H1 (cell line): ENCODE measurements at regions of chr3 and their contacts with region 1.

Region 1: GRCh38 chr3:142940483-142940882 is 23.0 kb downstream of the PAQR9 start:
- DNase-seq: no peak
- H3K4me3 ChIP-seq: no peak overlapping the region
- H3K27ac ChIP-seq: no peak overlapping the region
- H3K4me1 ChIP-seq: no peaks in the 10 kb centered on the region
- H3K27me3 ChIP-seq: no peaks in the 10 kb centered on the region
- CTCF ChIP-seq: no peak
- EP300 ChIP-seq: no peak
- POLR2A ChIP-seq: no peak
- RAD21 ChIP-seq: no peak

Region 2: DNA sequence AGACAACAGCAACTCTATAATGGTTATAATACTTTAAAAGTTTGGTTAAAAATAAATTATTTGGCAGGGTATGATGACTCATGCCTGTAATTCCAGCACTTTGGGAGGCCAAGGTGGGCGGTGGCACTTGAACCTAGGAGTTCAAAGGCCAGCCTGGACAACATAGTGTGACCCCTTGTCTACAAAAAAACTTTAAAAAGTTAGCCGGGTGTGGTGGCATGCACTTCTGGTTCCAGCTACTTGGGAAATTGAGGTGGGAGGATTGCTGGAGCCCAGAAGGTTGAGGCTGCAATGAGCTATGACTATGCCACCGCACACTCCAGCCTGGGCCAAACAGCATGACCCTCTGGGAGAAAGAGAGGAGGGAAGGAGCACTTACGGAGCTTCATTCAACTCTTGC is 224.4 kb before region 1 on chr3:
- CTCF ChIA-PET with region 1: no interaction called
- POLR2A ChIA-PET with region 1: no interaction called
- DNase-seq: no peak
- H3K4me3 ChIP-seq: no peak overlapping the region
- H3K27ac ChIP-seq: no peak overlapping the region
- H3K4me1 ChIP-seq: no peaks in the 10 kb centered on the region
- H3K27me3 ChIP-seq: no peaks in the 10 kb centered on the region
- CTCF ChIP-seq: no peak
- EP300 ChIP-seq: no peak
- POLR2A ChIP-seq: no peak
- RAD21 ChIP-seq: no peak

Region 3: DNA sequence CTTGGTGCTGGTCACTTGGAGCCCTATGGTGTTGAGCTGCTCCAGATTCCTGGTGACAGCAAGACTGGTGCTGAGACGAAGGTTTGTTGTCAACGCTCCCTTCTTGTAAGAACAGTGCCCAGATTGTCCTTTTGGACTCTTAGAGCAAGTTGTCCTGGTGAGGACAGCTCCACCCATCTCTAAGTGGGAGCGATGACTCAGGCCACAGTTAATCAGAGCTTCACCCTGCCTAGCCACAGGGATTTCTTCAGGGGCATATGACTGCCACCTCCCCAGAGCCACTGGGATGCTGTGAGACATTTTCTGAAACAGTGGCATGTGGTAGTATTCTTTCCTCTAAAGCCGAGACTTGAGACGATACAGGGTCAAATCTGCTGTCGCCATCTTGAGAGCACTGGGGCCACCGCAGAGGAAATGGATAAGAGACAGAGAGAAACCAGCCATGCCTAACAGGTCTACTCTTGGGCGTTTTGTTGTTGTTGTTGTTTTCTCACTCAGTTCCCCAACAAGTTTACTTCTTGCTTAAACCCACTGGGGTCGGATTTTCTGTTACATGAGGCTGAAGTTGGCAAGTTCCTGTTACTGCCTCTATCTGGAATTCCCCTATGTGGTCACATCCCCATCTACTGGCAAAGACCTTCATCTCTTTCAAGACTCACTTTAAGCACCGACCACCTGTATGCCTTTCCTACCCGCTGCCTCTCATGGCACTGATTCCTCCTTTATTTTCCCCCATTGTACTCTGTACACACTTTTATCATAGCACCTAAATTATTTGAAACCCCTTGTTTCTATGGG is 35.6 kb before region 1 on chr3:
- CTCF ChIA-PET with region 1: no interaction called
- POLR2A ChIA-PET with region 1: no interaction called
- DNase-seq: peak in 1 of 2 experiments; percentile 50
- H3K4me3 ChIP-seq: no peak overlapping the region
- H3K27ac ChIP-seq: no peak overlapping the region
- H3K4me1 ChIP-seq: no peaks in the 10 kb centered on the region
- H3K27me3 ChIP-seq: no peaks in the 10 kb centered on the region
- CTCF ChIP-seq: peak in 2 of 3 experiments; percentile 73 to 75; a peak in 3 of 4 replicates
- EP300 ChIP-seq: no peak
- POLR2A ChIP-seq: no peak
- RAD21 ChIP-seq: peak; percentile 92

Region 4: GRCh38 chr3:142987080-142987700 is 46.7 kb after region 1 on chr3:
- CTCF ChIA-PET with region 1: interaction called, 12 read pairs
- POLR2A ChIA-PET with region 1: no interaction called
- DNase-seq: no peak
- H3K4me3 ChIP-seq: no peak overlapping the region
- H3K27ac ChIP-seq: no peak overlapping the region
- H3K4me1 ChIP-seq: peaks cover 0 to 3% (median under 1%) of the 10 kb centered on the region in 4 experiments; a peak in 3 of 7 replicates
- H3K27me3 ChIP-seq: no peaks in the 10 kb centered on the region
- CTCF ChIP-seq: peak in 2 of 3 experiments; percentile 38 to 53; a peak in 2 of 4 replicates
- EP300 ChIP-seq: no peak
- POLR2A ChIP-seq: no peak
- RAD21 ChIP-seq: peak in 1 of 2 experiments; percentile 43; a peak in 3 of 4 replicates